Head of caudate nucleus (tissue), 42 donors: ENCODE measurements at regions of chr11 and their contacts with region 1.

Region 1: DNA sequence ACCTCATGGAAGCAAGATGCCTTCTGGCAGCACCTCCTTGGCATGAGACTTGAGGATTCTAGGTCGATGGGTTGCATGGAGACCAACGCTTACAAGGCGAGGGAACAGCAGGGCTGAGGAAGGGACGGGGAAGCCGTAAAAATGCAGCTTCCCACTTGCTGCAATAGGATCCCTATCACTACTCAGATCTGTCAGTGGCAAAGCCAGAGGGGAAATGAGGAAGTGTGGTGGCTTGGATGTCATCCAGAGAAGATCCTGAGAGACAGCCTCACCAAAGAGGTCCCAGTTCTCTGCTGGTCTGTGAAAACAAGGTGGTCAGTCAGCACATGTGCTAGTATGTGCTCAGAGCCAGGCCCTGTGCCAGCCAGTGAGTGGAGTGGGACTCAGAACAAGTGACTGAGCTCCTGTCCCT is 22.2 kb downstream of the CYB5R2 start:
- DNase-seq: peak in 31 of 42 donors; percentile 32 to 83 (median 60)

Region 2: GRCh38 chr11:6895010-6895409 is 756.1 kb before region 1 on chr11:
- intact Hi-C with region 1: no loop called
- DNase-seq: no peak

Region 3: DNA sequence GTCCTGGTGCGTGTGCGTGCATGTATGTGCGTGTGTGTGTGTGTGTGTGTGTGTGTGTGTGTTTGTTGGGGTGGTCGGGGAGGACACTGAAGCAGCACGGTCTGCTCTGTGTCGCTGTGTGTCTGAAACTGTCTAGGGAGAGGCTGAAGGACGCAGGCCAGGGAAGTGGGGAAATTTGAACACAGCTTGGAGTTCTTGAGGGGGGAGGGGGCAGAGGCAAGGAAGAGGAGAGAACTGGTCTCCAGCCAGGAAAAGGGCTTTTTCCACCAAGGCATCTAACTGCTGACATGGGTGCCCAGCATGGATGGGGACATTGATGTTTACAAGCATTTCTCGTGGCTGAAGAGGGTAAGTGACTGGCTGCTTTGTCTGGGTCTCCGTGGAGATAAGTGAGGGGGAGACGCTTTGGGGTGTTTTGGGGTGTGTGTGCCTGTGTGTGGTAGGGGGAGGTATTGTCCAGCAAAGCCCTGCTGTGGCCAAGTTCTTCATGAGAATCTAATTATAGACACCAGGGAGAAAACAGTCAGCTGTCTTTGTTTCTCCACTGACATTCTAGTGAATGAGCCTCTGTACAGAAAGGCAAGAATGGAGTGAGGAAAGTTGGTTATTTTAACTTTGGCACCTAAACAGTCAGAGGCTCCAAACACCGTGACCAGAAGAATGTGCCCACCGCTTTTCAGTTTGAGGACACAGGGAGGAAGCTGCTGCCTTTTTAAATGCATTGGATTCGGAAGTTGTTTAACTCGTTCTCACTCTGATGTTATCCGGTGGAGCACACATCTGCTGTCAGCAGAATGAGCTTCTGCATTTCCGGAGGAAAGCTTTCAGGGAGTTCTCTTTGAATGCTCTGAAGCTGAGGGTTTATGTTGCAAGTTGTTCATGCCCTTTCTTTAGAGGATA is 73.6 kb before region 1 on chr11:
- intact Hi-C with region 1: loop called (anchors 5 kb)
- DNase-seq: peak; percentile 38 to 94 (median 80)